Stomach (tissue), 19 donors: ENCODE measurements at regions of chr1 and their contacts with region 1.

Region 1: DNA sequence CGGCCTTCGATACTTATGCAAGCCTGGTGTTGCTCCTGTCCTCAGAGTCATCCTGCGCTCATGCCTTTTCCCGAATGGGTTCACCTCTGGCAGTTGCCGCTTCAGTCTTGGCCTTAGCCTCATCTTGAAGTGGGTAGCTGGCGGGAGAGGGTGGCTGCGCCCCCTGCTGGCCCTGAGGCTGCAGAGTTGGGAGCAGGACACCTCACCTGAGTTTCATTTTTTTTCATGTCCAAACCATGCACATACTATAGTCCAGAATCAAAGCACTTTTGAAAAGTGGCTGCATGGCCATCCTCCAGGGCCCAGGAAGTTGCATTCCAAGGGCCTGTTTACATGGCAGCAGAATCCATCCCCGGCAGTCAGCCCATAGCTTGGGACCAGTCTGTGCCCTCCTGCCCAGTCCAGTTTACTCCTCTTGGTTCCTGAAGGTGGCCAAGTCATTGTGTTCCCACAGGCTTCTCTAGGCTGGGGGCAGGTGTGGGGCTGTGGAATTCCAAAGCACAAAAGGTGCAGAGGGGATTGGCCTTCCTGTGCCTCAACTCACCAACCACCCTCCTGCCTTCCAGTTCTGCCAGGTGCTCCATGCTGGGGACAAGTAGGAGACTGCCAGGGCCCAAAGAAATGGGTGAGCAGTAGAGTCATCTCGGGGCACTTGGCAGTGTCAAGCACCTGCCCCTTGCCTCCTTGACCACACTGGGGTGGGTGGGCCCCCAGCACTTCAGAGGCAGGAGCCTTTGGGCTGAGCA is 44.0 kb downstream of the YARS1 start:
- DNase-seq: peak; percentile 90 to 93
- H3K4me3 ChIP-seq: no peak overlapping the region
- H3K27ac ChIP-seq: peak overlapping the region; percentile 12 to 74 (median 53)
- H3K4me1 ChIP-seq: peaks cover 21 to 74% (median 52%) of the 10 kb centered on the region in 4 donors
- H3K27me3 ChIP-seq: no peaks in the 10 kb centered on the region
- CTCF ChIP-seq: peak in 5 of 7 experiments; percentile 87 to 97 (median 90)
- EP300 ChIP-seq: no peak
- POLR2A ChIP-seq: no peak

Region 2: GRCh38 chr1:32464716-32465577 is 308.2 kb before region 1 on chr1 and contains the start of gene ZBTB8B:
- intact Hi-C with region 1: no loop called
- DNase-seq: peak; percentile 71 to 96
- H3K4me3 ChIP-seq: peak within 1 kb of the TSS; percentile 38 to 53 (median 49)
- H3K27ac ChIP-seq: no peak within 1 kb of the TSS
- H3K4me1 ChIP-seq: peaks cover 15 to 19% (median 17%) of the 10 kb centered on the region in 4 donors
- H3K27me3 ChIP-seq: peaks cover 0 to 70% (median 40%) of the 10 kb centered on the region in 3 donors
- CTCF ChIP-seq: no peak
- EP300 ChIP-seq: no peak
- POLR2A ChIP-seq: no peak
- total RNA-seq, gene ZBTB8B: under 0.01 to 0.37 TPM in 2 of 5 donors, not detected in the others

Region 3: DNA sequence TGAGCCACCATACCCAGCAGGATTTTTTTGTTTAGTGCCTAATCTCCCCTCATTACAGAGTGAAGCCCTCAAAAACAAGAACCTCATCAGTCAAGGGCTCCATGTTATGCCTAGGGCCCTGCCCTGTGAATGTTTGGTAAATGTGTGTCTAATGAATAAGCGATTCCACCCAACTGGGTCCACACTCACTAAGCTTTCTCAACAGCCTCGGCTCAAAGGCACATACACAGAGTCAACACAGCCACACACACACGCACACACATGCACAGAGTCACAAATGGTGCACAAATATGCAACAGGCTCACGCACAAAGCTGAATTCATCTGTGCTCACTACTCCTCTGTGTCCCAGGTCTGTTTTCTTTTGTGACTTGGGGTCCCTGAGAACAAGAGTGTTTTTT is 58.9 kb before region 1 on chr1:
- intact Hi-C with region 1: loop called (anchors 5 kb)
- DNase-seq: peak; percentile 46 to 91
- H3K4me3 ChIP-seq: no peak overlapping the region
- H3K27ac ChIP-seq: peak overlapping the region in 3 of 5 donors; percentile 29 to 61 (median 58)
- H3K4me1 ChIP-seq: peaks cover 15 to 33% (median 22%) of the 10 kb centered on the region in 4 donors
- H3K27me3 ChIP-seq: no peaks in the 10 kb centered on the region
- CTCF ChIP-seq: no peak
- EP300 ChIP-seq: no peak
- POLR2A ChIP-seq: no peak

Region 4: GRCh38 chr1:33055210-33056008 is 282.2 kb after region 1 on chr1:
- intact Hi-C with region 1: no loop called
- DNase-seq: peak; percentile 59 to 92
- H3K4me3 ChIP-seq: no peak overlapping the region
- H3K27ac ChIP-seq: peak overlapping the region in 1 of 5 donors; percentile 54
- H3K4me1 ChIP-seq: peaks cover 6 to 15% (median 7%) of the 10 kb centered on the region in 4 donors
- H3K27me3 ChIP-seq: no peaks in the 10 kb centered on the region
- CTCF ChIP-seq: peak in 5 of 7 experiments; percentile 47 to 69 (median 54)
- EP300 ChIP-seq: no peak
- POLR2A ChIP-seq: no peak